Activated B cell treated with CpG ODN at 0.5 μM for 24 hours (primary cell): ENCODE measurements at regions of chr6 and their contacts with region 1.

Region 1: DNA sequence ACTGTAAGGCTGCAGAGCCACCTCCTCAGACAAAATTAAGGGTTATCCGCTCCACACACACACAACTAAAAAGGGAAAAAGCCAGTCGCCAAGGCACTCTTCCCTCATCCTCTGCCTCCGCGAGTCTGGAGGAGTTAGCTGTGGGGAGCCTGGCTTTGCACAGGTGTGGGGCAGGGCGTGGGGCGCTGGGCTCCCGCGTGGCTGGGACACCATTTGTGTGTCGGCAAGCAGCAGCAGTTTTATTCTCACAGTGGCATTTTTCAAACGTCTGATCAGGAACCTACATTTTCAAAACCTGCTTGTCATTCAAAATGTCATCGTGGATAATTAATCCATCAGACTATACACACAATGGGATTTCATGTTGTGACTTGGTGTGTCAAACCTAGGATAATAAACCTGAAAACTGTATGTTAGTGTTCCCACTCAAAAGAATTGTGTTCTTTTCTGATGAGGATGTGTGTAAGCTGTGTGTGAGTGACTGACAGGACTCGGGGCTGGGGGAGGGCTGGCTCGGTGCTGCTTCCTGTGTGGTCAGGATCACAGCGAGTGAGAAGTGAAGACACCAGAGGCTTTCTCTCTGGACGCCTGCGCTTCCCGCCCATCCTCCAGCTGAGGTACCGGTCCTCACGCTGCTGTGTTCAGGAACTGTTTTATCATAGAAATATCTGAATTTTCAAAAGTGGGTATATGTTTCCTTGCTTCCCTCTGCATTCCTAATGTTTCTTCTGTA is 83.1 kb downstream of the IRF4 start:
- DNase-seq: peak; percentile 40
- ATAC-seq: peak; percentile 66
- H3K4me3 Mint-ChIP-seq: peak overlapping the region; percentile 48
- H3K27ac Mint-ChIP-seq: peak overlapping the region; percentile 39
- H3K4me1 Mint-ChIP-seq: peaks cover 60% of the 10 kb centered on the region
- H3K27me3 Mint-ChIP-seq: peaks cover 2% of the 10 kb centered on the region
- CTCF ChIP-seq: no peak

Region 2: DNA sequence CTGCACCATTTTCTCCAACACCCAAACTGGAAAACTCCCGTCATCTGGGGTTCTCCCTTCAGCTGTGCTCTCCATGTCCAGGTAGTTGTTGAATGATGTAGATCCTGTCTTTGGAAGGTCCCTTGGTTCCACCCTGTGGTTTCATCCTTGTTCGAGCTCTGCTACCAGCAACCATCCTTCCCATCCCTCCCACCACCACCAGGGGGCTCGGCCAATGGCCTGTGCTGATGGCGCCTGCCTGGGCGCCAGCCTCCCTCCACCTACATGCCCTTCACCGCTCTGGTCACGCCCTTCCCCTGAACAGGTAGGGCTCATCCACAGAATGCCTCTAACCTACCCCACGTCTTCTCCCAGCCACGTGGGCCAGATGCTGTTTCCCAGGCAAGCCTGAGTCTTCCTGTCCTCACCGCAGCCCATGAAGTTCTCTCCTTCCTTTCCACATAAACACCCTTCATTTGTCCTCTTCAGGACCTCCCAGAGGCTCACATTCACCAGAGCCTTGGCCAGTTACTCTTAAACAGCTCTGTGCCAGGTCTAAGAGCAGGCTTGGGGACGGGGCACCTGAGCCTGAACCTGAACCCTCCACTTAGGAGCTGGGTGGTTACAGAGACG is 257.5 kb before region 1 on chr6:
- CTCF ChIA-PET with region 1: no interaction called
- POLR2A ChIA-PET with region 1: no interaction called
- intact Hi-C with region 1: loop called (anchors 1 kb)
- DNase-seq: no peak
- ATAC-seq: no peak
- H3K4me3 Mint-ChIP-seq: peak overlapping the region; percentile 61
- H3K27ac Mint-ChIP-seq: peak overlapping the region; percentile 90
- H3K4me1 Mint-ChIP-seq: peaks cover 81% of the 10 kb centered on the region
- H3K27me3 Mint-ChIP-seq: no peaks in the 10 kb centered on the region
- CTCF ChIP-seq: no peak

Region 3: DNA sequence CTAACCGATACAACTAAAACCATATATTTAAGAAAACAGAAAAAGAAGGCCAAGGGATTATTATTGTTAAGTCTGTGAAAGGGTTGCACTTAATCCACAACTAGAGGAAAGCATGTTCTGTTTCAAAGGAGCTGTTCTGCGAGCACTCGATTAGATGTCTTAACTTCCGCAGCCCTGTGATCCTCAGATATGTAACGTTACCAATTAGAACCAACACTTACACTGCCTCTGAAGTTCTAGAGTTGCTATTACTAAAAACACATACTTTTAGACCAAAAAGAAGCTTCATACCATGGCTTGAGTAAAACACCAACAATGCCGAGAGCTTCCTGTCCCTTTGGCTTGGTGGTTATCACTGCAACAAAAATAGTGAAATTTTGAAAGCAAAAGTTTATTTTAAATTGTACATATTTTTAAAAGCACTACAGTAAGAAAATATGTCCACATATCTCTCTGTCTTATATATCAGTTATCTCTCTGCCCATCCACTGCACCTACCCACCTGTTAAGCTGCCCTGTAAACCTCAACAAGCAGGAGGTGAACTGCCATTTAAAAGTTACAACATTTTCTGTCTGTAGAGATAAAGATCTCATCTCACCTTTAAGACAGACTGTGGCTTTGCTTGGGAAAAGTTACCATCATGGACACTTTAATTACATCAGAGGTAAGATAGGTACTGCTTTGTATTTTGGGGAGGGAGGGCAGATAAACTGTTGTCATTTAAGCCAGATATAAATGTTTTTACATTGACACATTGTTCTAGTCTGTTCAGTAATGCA is 189.4 kb before region 1 on chr6:
- CTCF ChIA-PET with region 1: no interaction called
- POLR2A ChIA-PET with region 1: no interaction called
- intact Hi-C with region 1: no loop called
- DNase-seq: no peak
- ATAC-seq: no peak
- H3K4me3 Mint-ChIP-seq: no peak overlapping the region
- H3K27ac Mint-ChIP-seq: peak overlapping the region; percentile 93
- H3K4me1 Mint-ChIP-seq: peaks cover 50% of the 10 kb centered on the region
- H3K27me3 Mint-ChIP-seq: no peaks in the 10 kb centered on the region
- CTCF ChIP-seq: no peak

Region 4: DNA sequence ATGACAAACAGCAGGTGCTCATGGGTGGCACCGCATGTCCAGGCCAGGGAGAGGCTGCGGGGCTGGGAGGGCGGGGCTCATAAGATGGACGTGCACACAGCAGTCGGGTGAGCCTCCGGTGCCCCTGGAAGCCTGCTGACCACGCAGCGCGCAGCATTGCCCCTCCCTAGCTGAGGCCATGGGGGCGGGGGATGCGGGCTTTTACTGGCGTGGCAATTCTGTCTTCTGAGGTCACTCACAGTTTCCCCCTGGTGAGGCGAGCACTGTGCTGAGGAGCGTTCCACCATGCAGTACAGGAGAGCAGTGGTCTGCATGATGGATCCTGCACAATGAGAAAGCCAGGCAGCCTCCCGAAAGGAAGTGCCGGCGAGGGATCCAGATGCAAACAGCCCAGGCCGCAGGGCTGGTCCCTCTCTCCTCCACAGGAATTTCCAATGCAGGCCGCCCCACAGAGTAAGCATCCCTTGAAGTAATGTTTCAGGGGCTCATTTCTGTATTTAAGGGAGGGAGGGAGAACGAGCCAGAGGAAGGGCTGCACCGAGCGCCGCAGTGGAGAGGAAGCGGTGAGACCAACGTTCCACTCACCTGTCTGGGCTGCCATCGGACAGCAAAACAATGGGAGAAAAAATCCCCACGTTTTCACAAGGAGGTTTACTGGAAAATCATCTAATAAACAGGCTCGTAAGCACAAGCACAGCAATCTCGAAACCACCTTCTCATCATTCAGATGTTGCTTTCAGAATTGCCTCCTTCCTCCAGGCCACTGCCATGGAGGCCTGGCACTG is 27.0 kb before region 1 on chr6:
- CTCF ChIA-PET with region 1: no interaction called
- POLR2A ChIA-PET with region 1: no interaction called
- intact Hi-C with region 1: loop called (anchors 2 kb)
- DNase-seq: no peak
- ATAC-seq: no peak
- H3K4me3 Mint-ChIP-seq: no peak overlapping the region
- H3K27ac Mint-ChIP-seq: no peak overlapping the region
- H3K4me1 Mint-ChIP-seq: peaks cover 14% of the 10 kb centered on the region
- H3K27me3 Mint-ChIP-seq: no peaks in the 10 kb centered on the region
- CTCF ChIP-seq: no peak

Region 5: DNA sequence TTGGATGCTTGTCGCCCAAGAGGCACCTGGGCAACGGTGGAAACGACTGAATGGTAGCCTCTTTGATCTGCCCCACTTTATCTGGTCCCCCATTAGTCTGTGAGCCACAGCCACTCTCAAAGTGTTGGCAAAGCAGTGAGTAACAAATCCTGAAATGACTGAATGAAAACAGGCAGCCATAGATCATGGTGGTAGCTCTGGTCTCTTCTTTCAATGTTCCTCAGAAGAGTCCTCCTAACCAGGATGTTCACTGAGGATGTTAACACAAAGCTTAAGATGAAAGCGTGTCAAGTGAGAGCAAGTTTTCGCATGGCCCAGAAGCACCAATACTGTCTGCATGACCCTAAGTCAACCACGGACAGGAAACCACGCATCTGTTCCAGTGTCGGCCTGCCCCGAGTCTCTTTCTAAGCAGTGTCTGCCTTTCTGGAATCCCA is 24.2 kb after region 1 on chr6:
- CTCF ChIA-PET with region 1: no interaction called
- POLR2A ChIA-PET with region 1: interaction called, 6 read pairs
- intact Hi-C with region 1: loop called (anchors 2 kb)
- DNase-seq: no peak
- ATAC-seq: peak; percentile 18
- H3K4me3 Mint-ChIP-seq: no peak overlapping the region
- H3K27ac Mint-ChIP-seq: peak overlapping the region; percentile 18
- H3K4me1 Mint-ChIP-seq: peaks cover 40% of the 10 kb centered on the region
- H3K27me3 Mint-ChIP-seq: no peaks in the 10 kb centered on the region
- CTCF ChIP-seq: no peak